B cell (primary cell): ENCODE measurements at regions of chr2 and their contacts with region 1.

Region 1: DNA sequence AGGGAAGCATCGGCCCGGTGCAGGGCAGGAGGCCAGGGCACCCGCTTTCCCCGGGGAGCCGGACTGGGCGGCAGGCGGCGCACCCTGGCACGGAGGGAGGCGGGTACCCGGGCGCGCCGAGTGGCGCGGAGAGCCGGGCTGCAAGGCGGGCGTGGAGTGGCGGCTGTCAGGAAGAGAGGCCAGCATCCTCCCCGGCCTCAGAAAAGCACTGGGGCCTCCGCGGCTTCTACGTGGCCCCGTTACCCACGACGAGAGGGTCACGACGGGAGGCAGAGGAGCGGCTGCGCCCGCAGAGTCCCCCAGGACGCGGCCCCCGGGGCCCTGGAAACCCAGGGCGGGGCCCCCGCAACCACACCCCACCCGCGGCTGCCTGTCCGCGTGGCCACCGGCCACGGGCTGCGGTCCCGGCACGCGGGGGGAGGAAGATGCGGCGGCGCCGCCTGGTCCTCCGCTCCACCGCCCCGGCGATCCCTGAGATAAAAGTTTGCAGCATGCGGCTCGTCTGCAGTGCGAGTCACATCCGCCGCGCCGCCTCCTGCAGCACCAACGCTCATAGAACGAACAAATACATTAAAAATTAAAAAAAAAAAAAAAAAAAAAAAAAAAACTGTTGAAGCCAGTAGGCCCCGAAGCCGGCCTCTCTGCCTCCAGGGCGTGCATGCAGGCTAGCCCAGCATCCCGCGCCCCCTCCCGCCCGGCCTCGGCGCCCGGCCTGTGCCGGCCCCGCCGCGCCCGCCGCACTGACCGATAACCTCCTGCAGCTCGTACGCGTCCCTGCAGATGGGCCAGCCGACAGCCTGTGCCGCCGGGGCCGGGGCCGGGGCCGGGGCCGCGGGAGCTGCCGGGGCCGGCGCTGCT is 683 bp downstream of the STK39 start:
- DNase-seq: peak; percentile 83
- ATAC-seq: peak; percentile 49
- H3K4me3 ChIP-seq: peak overlapping the region; percentile 2 to 74 (median 68)
- H3K4me3 Mint-ChIP-seq: peak overlapping the region; percentile 93
- H3K27ac ChIP-seq: peak overlapping the region; percentile 23 to 70
- H3K27ac Mint-ChIP-seq: peak overlapping the region; percentile 93
- H3K4me1 ChIP-seq: peaks cover 7 to 23% of the 10 kb centered on the region in 2 donors
- H3K4me1 Mint-ChIP-seq: peaks cover 31% of the 10 kb centered on the region
- H3K27me3 ChIP-seq: no peaks in the 10 kb centered on the region
- H3K27me3 Mint-ChIP-seq: no peaks in the 10 kb centered on the region
- CTCF ChIP-seq: peak; percentile 28

Region 2: GRCh38 chr2:168174756-168175155 is 72.0 kb before region 1 on chr2:
- CTCF ChIA-PET with region 1: interaction called, 3 read pairs
- POLR2A ChIA-PET with region 1: no interaction called
- intact Hi-C with region 1: loop called (anchors 5 kb)
- DNase-seq: peak; percentile 60
- ATAC-seq: peak; percentile 58
- H3K4me3 ChIP-seq: peak overlapping the region in 3 of 5 experiments; percentile 19 to 50 (median 21)
- H3K4me3 Mint-ChIP-seq: peak overlapping the region; percentile 69
- H3K27ac ChIP-seq: peak overlapping the region in 1 of 2 donors; percentile 42
- H3K27ac Mint-ChIP-seq: peak overlapping the region; percentile 2
- H3K4me1 ChIP-seq: peaks cover 13 to 21% of the 10 kb centered on the region in 2 donors
- H3K4me1 Mint-ChIP-seq: peaks cover 32% of the 10 kb centered on the region
- H3K27me3 ChIP-seq: no peaks in the 10 kb centered on the region
- H3K27me3 Mint-ChIP-seq: no peaks in the 10 kb centered on the region
- CTCF ChIP-seq: no peak

Region 3: GRCh38 chr2:168210895-168211570 is 35.7 kb before region 1 on chr2:
- CTCF ChIA-PET with region 1: no interaction called
- POLR2A ChIA-PET with region 1: no interaction called
- intact Hi-C with region 1: loop called (anchors 2 kb)
- DNase-seq: peak; percentile 30
- ATAC-seq: peak; percentile 53
- H3K4me3 ChIP-seq: peak overlapping the region in 4 of 5 experiments; percentile 1 to 48 (median 20)
- H3K4me3 Mint-ChIP-seq: peak overlapping the region; percentile 69
- H3K27ac ChIP-seq: no peak overlapping the region
- H3K27ac Mint-ChIP-seq: no peak overlapping the region
- H3K4me1 ChIP-seq: peaks cover 19 to 29% of the 10 kb centered on the region in 2 donors
- H3K4me1 Mint-ChIP-seq: peaks cover 46% of the 10 kb centered on the region
- H3K27me3 ChIP-seq: no peaks in the 10 kb centered on the region
- H3K27me3 Mint-ChIP-seq: no peaks in the 10 kb centered on the region
- CTCF ChIP-seq: no peak

Region 4: DNA sequence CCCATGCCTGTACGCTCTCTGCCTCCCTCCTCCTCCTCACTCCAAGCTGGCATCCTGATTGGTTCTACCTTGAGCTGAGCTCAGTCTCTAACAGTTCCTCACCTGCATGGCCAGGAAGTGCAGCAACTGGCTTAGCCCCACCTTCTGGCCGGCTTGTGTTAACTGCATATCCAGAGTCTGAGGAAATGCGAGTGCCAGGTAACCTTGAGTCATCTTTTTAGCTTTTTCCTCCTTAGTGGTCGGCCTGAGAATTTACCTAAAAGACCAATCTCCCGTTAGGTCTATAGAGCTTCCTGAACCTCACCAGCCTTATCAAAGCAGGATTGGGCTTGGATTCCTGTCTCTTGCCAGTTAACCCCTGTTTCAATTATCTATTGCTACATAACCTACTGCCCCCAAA is 90.2 kb after region 1 on chr2:
- CTCF ChIA-PET with region 1: no interaction called
- POLR2A ChIA-PET with region 1: no interaction called
- intact Hi-C with region 1: loop called (anchors 5 kb)
- DNase-seq: peak; percentile 39
- ATAC-seq: peak; percentile 68
- H3K4me3 ChIP-seq: no peak overlapping the region
- H3K4me3 Mint-ChIP-seq: no peak overlapping the region
- H3K27ac ChIP-seq: no peak overlapping the region
- H3K27ac Mint-ChIP-seq: no peak overlapping the region
- H3K4me1 ChIP-seq: no peaks in the 10 kb centered on the region
- H3K4me1 Mint-ChIP-seq: peaks cover 3% of the 10 kb centered on the region
- H3K27me3 ChIP-seq: no peaks in the 10 kb centered on the region
- H3K27me3 Mint-ChIP-seq: peaks cover 10% of the 10 kb centered on the region
- CTCF ChIP-seq: peak; percentile 33